Breast epithelium (tissue), 4 donors: ENCODE measurements at regions of chr4 and their contacts with region 1.

Region 1: DNA sequence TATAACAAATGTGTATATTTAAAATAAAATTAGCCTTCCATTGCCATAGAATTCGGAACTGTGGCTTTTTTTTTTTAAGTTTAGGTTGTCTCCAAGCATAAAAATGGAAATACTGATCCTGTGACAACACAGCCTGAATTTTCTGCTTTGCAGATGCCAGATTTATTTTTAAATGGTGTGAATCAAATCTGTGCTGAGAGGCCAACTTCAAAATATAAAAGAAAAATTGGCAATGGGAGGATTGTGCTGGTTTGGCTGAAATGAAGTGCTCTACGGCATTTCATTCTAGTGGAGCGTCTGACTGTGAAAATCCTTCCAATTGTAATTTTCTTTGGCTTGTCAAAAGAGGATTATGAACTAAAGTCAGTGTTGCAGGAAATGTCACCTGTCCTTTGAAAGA is 580.3 kb upstream of the ZFP42 start:
- DNase-seq: no peak
- H3K4me3 ChIP-seq: no peak overlapping the region
- H3K27ac ChIP-seq: no peak overlapping the region
- H3K4me1 ChIP-seq: no peaks in the 10 kb centered on the region
- H3K27me3 ChIP-seq: no peaks in the 10 kb centered on the region
- CTCF ChIP-seq: no peak
- POLR2A ChIP-seq: no peak

Region 2: GRCh38 chr4:186979961-186980745 is 435.1 kb before region 1 on chr4:
- intact Hi-C with region 1: loop called (anchors 10 kb)
- DNase-seq: no peak
- H3K4me3 ChIP-seq: no peak overlapping the region
- H3K27ac ChIP-seq: no peak overlapping the region
- H3K4me1 ChIP-seq: no peaks in the 10 kb centered on the region
- H3K27me3 ChIP-seq: no peaks in the 10 kb centered on the region
- CTCF ChIP-seq: no peak
- POLR2A ChIP-seq: no peak

Region 3: GRCh38 chr4:187321711-187322110 is 93.5 kb before region 1 on chr4:
- intact Hi-C with region 1: no loop called
- DNase-seq: no peak
- H3K4me3 ChIP-seq: no peak overlapping the region
- H3K27ac ChIP-seq: no peak overlapping the region
- H3K4me1 ChIP-seq: no peaks in the 10 kb centered on the region
- H3K27me3 ChIP-seq: no peaks in the 10 kb centered on the region
- CTCF ChIP-seq: no peak
- POLR2A ChIP-seq: no peak

Region 4: GRCh38 chr4:187436251-187436650 is 21.0 kb after region 1 on chr4:
- intact Hi-C with region 1: loop called (anchors 2 kb)
- DNase-seq: no peak
- H3K4me3 ChIP-seq: no peak overlapping the region
- H3K27ac ChIP-seq: no peak overlapping the region
- H3K4me1 ChIP-seq: no peaks in the 10 kb centered on the region
- H3K27me3 ChIP-seq: no peaks in the 10 kb centered on the region
- CTCF ChIP-seq: no peak
- POLR2A ChIP-seq: no peak